Caco-2 (cell line): ENCODE measurements at regions of chr7 and their contacts with region 1.

Region 1: GRCh38 chr7:115649389-115649788 is 381.2 kb downstream of the TFEC start:
- DNase-seq: peak in 1 of 2 experiments; percentile 40
- H3K4me3 ChIP-seq: no peak overlapping the region
- H3K4me3 Mint-ChIP-seq: peak overlapping the region; percentile 35
- H3K27ac Mint-ChIP-seq: peak overlapping the region; percentile 53
- H3K4me1 ChIP-seq: peaks cover 38% of the 10 kb centered on the region
- H3K4me1 Mint-ChIP-seq: peaks cover 20% of the 10 kb centered on the region
- H3K27me3 ChIP-seq: no peaks in the 10 kb centered on the region
- H3K27me3 Mint-ChIP-seq: no peaks in the 10 kb centered on the region
- CTCF ChIP-seq: no peak

Region 2: GRCh38 chr7:115620036-115620435 is 29.4 kb before region 1 on chr7:
- CTCF ChIA-PET with region 1: no interaction called
- POLR2A ChIA-PET with region 1: no interaction called
- intact Hi-C with region 1: loop called (anchors 2 kb)
- DNase-seq: peak in 1 of 2 experiments; percentile 11
- H3K4me3 ChIP-seq: no peak overlapping the region
- H3K4me3 Mint-ChIP-seq: no peak overlapping the region
- H3K27ac Mint-ChIP-seq: no peak overlapping the region
- H3K4me1 ChIP-seq: peaks cover 24% of the 10 kb centered on the region
- H3K4me1 Mint-ChIP-seq: peaks cover 19% of the 10 kb centered on the region
- H3K27me3 ChIP-seq: no peaks in the 10 kb centered on the region
- H3K27me3 Mint-ChIP-seq: no peaks in the 10 kb centered on the region
- CTCF ChIP-seq: no peak

Region 3: GRCh38 chr7:115672024-115672423 is 22.6 kb after region 1 on chr7:
- CTCF ChIA-PET with region 1: no interaction called
- POLR2A ChIA-PET with region 1: no interaction called
- intact Hi-C with region 1: loop called (anchors 2 kb)
- DNase-seq: no peak
- H3K4me3 ChIP-seq: no peak overlapping the region
- H3K4me3 Mint-ChIP-seq: no peak overlapping the region
- H3K27ac Mint-ChIP-seq: no peak overlapping the region
- H3K4me1 ChIP-seq: peaks cover 16% of the 10 kb centered on the region; the same call in 1 of the 2 replicates
- H3K4me1 Mint-ChIP-seq: peaks cover 7% of the 10 kb centered on the region
- H3K27me3 ChIP-seq: no peaks in the 10 kb centered on the region
- H3K27me3 Mint-ChIP-seq: no peaks in the 10 kb centered on the region
- CTCF ChIP-seq: no peak